Activated CD4-positive, alpha-beta memory T cell treated with anti-CD3 and anti-CD28 coated beads for 36 hours (primary cell): ENCODE measurements at regions of chr2 and their contacts with region 1.

Region 1: DNA sequence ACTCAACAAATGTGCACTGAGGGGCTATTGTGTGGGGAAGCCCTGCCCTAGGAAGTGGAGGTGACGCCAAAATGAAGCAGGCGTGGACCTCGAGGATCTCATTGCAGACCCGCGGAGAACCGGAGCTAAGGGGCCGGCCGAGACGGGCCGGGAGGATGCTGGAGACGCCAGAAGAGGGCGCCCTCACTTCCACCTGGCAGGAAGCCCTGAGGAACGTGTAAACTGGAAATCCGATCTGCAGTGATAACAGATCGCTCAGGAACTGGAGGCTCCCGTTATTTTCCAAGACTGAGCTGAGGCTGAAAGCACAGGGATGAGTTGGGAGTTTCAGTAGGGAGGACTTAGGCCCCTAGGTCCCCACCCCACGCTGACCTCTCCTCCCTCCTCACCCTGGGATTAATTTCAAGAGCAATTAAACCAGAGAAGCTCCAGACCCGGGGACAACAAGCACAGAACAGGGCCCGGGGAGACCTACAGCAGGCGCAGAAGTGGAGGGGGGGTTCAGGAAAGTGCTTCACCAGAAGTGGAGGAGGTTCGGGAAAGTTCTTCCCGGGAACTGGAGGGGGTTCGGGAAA is 7.7 kb upstream of the COL6A3 start:
- DNase-seq: peak; percentile 86
- H3K4me3 Mint-ChIP-seq: peak overlapping the region; percentile 38
- H3K27ac Mint-ChIP-seq: peak overlapping the region; percentile 50
- H3K4me1 Mint-ChIP-seq: peaks cover 20% of the 10 kb centered on the region
- H3K27me3 Mint-ChIP-seq: no peaks in the 10 kb centered on the region

Region 2: DNA sequence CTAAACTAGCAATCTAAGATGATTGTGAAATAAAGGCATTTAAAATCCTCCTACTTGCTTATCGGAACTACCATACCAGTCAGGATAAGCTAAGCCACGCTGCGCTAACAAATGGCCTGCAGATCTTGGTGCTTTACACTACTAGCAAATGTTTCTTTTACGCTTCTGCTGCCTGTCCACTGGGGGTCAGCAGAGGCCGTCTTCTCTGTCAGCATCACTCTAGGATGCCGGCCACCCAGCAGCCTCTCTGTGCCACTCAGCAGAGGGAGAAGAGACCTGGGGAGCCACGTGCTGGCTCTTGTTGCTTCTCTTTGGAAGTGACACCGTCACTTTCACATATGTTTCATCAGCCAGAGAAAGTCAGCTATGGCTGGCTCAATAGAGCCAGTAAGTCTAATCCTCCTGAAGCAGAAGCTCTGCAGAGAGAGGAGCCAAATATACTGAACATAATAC is 299.4 kb before region 1 on chr2:
- CTCF ChIA-PET with region 1: interaction called, 13 read pairs
- POLR2A ChIA-PET with region 1: no interaction called
- intact Hi-C with region 1: no loop called
- DNase-seq: peak; percentile 81
- H3K4me3 Mint-ChIP-seq: no peak overlapping the region
- H3K27ac Mint-ChIP-seq: no peak overlapping the region
- H3K4me1 Mint-ChIP-seq: peaks cover 3% of the 10 kb centered on the region
- H3K27me3 Mint-ChIP-seq: no peaks in the 10 kb centered on the region

Region 3: DNA sequence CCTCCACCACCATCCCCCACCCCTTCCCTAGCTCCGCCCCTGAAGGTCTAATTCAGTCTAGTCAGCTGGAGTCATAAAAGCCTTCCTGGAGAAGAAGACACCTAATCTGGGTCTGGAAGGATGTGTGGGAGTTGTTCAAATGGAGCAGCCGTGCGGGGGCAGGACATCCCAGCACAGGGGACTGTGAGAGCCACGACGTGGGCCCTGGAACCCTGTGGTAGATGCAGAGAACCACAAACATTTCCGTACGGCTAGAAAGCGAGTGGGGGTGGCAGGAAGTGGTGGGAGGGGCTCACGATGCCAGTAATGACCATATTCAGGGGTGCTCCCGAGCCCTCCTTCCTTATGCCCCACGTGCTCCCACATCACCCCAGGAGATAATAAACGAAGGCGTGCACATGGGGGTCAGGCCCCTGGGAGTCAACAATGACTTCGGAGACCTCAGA is 13.3 kb after region 1 on chr2:
- CTCF ChIA-PET with region 1: interaction called, 64 read pairs
- POLR2A ChIA-PET with region 1: interaction called, 90 read pairs
- intact Hi-C with region 1: loop called (anchors 2 kb)
- DNase-seq: peak; percentile 94
- H3K4me3 Mint-ChIP-seq: peak overlapping the region; percentile 80
- H3K27ac Mint-ChIP-seq: peak overlapping the region; percentile 96
- H3K4me1 Mint-ChIP-seq: peaks cover 96% of the 10 kb centered on the region
- H3K27me3 Mint-ChIP-seq: no peaks in the 10 kb centered on the region

Region 4: DNA sequence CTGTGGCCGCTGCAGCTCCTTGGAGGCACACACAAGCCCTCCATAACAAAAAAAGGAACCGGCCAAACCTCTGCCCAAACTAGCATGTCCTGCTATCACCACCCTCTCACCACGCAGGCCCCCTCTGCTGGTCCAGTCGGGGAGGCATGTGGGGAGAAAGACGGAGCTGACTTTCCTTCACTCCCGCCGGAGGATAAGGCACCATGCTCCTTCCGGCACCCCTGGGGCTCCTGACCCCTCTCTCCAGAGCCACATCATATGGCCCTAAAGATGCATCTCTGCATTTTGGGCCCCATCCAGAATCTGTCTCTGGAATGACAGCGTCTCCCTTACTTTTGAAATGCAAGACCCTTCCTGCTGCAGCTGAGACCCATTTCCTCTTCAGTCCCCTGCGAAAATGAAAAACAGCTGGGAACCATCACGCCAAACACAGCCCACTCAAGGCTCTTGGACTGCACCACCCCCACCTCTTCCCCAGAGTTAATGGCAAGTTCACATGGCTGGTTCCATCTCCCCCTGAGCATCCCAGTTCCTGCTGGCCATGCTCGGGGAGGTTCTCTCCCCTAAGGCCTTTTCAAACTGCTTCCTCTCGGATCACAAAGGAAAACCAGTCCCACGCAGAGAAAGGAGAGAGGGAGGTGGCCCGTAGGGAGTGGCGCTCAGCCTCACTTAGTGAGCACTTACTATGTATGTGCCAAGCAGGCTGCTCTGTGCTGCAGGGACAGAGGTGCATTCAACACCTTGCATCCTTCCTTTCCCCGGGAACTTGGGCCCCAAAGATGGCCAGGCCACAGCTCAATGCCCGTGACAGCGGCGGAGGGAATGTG is 30.2 kb after region 1 on chr2:
- CTCF ChIA-PET with region 1: interaction called, 12 read pairs
- POLR2A ChIA-PET with region 1: no interaction called
- intact Hi-C with region 1: no loop called
- DNase-seq: peak; percentile 3
- H3K4me3 Mint-ChIP-seq: no peak overlapping the region
- H3K27ac Mint-ChIP-seq: no peak overlapping the region
- H3K4me1 Mint-ChIP-seq: peaks cover 6% of the 10 kb centered on the region
- H3K27me3 Mint-ChIP-seq: no peaks in the 10 kb centered on the region

Region 5: DNA sequence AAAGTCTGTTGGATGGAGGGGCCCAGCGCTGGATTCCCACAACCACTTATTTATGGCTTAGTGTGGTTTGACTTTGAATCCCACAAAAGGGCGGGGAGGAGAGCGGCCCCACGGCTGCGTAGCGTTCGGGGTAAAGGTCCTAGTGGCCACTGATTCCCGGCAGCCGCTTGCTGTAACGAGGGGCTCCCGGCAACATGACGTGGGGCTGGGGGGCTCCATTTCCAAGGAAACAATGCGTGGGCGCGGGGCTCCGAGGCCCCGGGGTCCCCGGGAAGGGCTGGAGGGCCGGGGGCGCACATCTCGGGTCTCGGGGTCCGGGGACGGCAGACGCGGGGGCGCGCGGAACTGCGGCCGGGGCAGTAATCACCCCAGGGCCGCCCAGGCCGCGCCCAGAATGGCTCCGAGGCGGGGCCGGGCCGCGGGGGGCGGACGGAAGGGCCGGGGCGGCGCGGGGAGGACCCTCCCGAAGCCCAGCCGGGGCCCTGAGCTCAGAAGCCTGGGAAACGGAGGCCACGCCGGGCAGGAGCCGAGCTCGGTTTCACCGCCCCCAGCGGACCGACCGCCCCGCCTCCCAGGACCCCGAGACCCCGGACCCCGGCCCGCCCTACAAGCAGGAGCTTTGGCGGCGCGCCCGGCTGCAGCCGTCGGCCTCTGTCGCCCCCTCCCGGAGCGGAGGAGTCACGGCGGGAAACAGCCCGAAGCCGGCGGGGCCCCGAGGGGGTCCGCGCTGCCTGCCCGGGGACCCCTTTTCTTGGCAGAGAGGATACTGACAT is 53.5 kb after region 1 on chr2:
- CTCF ChIA-PET with region 1: interaction called, 208 read pairs
- POLR2A ChIA-PET with region 1: interaction called, 11 read pairs
- intact Hi-C with region 1: loop called (anchors 1 kb)
- DNase-seq: peak; percentile 79
- H3K4me3 Mint-ChIP-seq: peak overlapping the region; percentile 68
- H3K27ac Mint-ChIP-seq: peak overlapping the region; percentile 78
- H3K4me1 Mint-ChIP-seq: peaks cover 10% of the 10 kb centered on the region
- H3K27me3 Mint-ChIP-seq: peaks cover 18% of the 10 kb centered on the region

Region 6: GRCh38 chr2:237874585-237875161 is 453.0 kb after region 1 on chr2:
- CTCF ChIA-PET with region 1: no interaction called
- POLR2A ChIA-PET with region 1: no interaction called
- intact Hi-C with region 1: no loop called
- DNase-seq: no peak
- H3K4me3 Mint-ChIP-seq: no peak overlapping the region
- H3K27ac Mint-ChIP-seq: no peak overlapping the region
- H3K4me1 Mint-ChIP-seq: peaks cover 3% of the 10 kb centered on the region
- H3K27me3 Mint-ChIP-seq: peaks cover 20% of the 10 kb centered on the region